A673 (cell line): ENCODE measurements at regions of chr19 and their contacts with region 1.

Region 1: GRCh38 chr19:3557461-3558248 is at the start of gene MFSD12:
- DNase-seq: peak; percentile 97
- H3K4me3 ChIP-seq: peak within 1 kb of the TSS; percentile 92
- H3K27ac ChIP-seq: peak within 1 kb of the TSS; percentile 79
- H3K4me1 ChIP-seq: peaks cover 16% of the 10 kb centered on the region
- H3K27me3 ChIP-seq: no peaks in the 10 kb centered on the region
- CTCF ChIP-seq: no peak
- total RNA-seq, gene MFSD12: 44.7 and 48.2 TPM in 2 replicates

Region 2: GRCh38 chr19:3263866-3264265 is 293.8 kb before region 1 on chr19:
- CTCF ChIA-PET with region 1: interaction called, 11 read pairs
- POLR2A ChIA-PET with region 1: no interaction called
- intact Hi-C with region 1: no loop called
- DNase-seq: no peak
- H3K4me3 ChIP-seq: no peak overlapping the region
- H3K27ac ChIP-seq: no peak overlapping the region
- H3K4me1 ChIP-seq: peaks cover 15% of the 10 kb centered on the region
- H3K27me3 ChIP-seq: no peaks in the 10 kb centered on the region
- CTCF ChIP-seq: no peak

Region 3: DNA sequence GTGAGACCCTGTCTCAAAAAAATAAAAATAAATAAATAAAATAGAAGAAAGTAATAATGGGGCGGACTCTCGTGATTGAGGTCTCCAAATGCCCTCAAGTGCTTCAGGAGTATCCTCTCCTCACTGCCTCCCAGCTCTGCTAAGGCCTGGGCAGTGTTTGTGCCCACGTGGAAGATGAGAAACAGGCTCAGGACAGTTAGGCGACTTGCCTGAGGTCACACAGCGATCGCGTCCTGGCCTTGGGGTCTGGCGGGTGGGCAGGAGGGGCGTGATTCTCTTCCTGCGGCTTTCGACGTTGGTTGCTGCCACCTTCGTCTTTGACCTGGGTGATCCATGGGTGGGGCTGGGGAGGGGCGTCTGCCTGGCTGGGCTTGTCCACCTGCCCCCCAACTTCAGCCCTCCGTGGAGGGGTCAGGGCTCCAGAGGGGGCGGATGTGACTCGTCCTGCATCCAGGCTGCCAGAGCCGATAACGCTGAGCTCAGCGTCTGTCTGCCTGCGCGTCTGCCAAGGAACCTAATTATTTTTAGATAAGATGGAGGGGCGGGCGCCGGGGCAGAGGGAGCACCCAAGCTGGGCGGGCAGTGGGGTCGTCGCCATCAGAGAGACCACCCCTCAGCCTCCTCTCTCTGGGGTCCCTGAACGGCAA is 134.3 kb before region 1 on chr19:
- CTCF ChIA-PET with region 1: no interaction called
- POLR2A ChIA-PET with region 1: no interaction called
- intact Hi-C with region 1: no loop called
- DNase-seq: no peak
- H3K4me3 ChIP-seq: no peak overlapping the region
- H3K27ac ChIP-seq: no peak overlapping the region
- H3K4me1 ChIP-seq: peaks cover 6% of the 10 kb centered on the region
- H3K27me3 ChIP-seq: no peaks in the 10 kb centered on the region
- CTCF ChIP-seq: no peak

Region 4: GRCh38 chr19:3526507-3527244 is 31.0 kb before region 1 on chr19:
- CTCF ChIA-PET with region 1: no interaction called
- POLR2A ChIA-PET with region 1: no interaction called
- intact Hi-C with region 1: no loop called
- DNase-seq: no peak
- H3K4me3 ChIP-seq: no peak overlapping the region
- H3K27ac ChIP-seq: no peak overlapping the region
- H3K4me1 ChIP-seq: no peaks in the 10 kb centered on the region
- H3K27me3 ChIP-seq: no peaks in the 10 kb centered on the region
- CTCF ChIP-seq: peak; percentile 42; the same call in 1 of the 2 replicates

Region 5: GRCh38 chr19:3576718-3577527 is 19.3 kb after region 1 on chr19:
- CTCF ChIA-PET with region 1: no interaction called
- POLR2A ChIA-PET with region 1: interaction called, 10 read pairs
- intact Hi-C with region 1: no loop called
- DNase-seq: peak; percentile 87
- H3K4me3 ChIP-seq: peak overlapping the region; percentile 23
- H3K27ac ChIP-seq: peak overlapping the region; percentile 54
- H3K4me1 ChIP-seq: peaks cover 16% of the 10 kb centered on the region
- H3K27me3 ChIP-seq: no peaks in the 10 kb centered on the region
- CTCF ChIP-seq: no peak